Right lobe of liver (tissue), 6 donors: ENCODE measurements at regions of chr15 and their contacts with region 1.

Region 1: GRCh38 chr15:35444557-35445204 is 101.3 kb downstream of the DPH6 start:
- DNase-seq: no peak
- ATAC-seq: peak; percentile 68 to 83 (median 78)
- H3K4me3 ChIP-seq: no peak overlapping the region
- H3K27ac ChIP-seq: no peak overlapping the region
- H3K4me1 ChIP-seq: no peaks in the 10 kb centered on the region
- H3K27me3 ChIP-seq: no peaks in the 10 kb centered on the region
- CTCF ChIP-seq: peak; percentile 83 to 93 (median 86)
- POLR2A ChIP-seq: no peak

Region 2: GRCh38 chr15:35078221-35078915 is 366.3 kb before region 1 on chr15:
- intact Hi-C with region 1: loop called in 1 of 2 experiments (anchors 10 kb)
- DNase-seq: peak in 1 of 3 donors; percentile 61
- ATAC-seq: peak; percentile 95 to 99 (median 97)
- H3K4me3 ChIP-seq: no peak overlapping the region
- H3K27ac ChIP-seq: no peak overlapping the region
- H3K4me1 ChIP-seq: no peaks in the 10 kb centered on the region
- H3K27me3 ChIP-seq: no peaks in the 10 kb centered on the region
- CTCF ChIP-seq: peak; percentile 83 to 91 (median 87)
- POLR2A ChIP-seq: no peak

Region 3: GRCh38 chr15:35289024-35289617 is 155.6 kb before region 1 on chr15:
- intact Hi-C with region 1: loop called (anchors 10 kb)
- DNase-seq: no peak
- ATAC-seq: peak; percentile 82 to 92 (median 90)
- H3K4me3 ChIP-seq: no peak overlapping the region
- H3K27ac ChIP-seq: no peak overlapping the region
- H3K4me1 ChIP-seq: peaks cover 0 to 5% (median 0%) of the 10 kb centered on the region in 4 donors
- H3K27me3 ChIP-seq: no peaks in the 10 kb centered on the region
- CTCF ChIP-seq: peak; percentile 75 to 84 (median 80)
- POLR2A ChIP-seq: no peak